Motor neuron (in vitro differentiated cells): ENCODE measurements at regions of chr2 and their contacts with region 1.

Region 1: GRCh38 chr2:172931918-172932520 is 143.6 kb upstream of the MAP3K20 start:
- ATAC-seq: peak in 6 of 8 experiments; percentile 25 to 44 (median 32)
- H3K4me3 ChIP-seq: no peak overlapping the region
- H3K27ac ChIP-seq: no peak overlapping the region
- H3K4me1 ChIP-seq: peaks cover 28 to 43% of the 10 kb centered on the region in 2 donors

Region 2: DNA sequence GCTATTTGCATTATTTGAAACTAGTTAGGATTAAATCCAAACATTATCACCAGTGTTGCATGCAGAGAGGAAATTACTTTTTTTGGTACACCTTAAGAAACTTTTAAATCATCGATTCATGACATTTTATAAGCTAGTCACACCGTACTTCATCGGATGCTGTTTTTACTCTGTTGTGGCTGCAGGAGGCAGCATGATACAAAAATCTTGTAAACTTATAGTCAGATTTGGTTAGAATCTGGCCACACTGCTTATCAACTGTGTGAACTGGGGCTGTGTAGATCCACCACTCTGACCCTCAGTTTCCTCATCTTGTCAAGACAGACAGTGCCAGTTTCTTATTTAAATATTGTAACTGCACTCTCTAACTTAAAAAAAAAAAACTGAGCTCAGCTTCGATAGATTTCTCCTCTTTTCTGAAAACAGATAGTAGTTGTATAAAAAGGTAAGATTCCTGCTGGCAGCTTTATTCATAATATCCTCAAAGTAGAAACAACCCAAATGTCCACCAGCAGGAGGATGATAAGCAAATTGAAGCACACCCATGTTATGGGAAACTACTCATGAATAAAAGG is 118.6 kb before region 1 on chr2:
- in situ Hi-C with region 1: loop called (anchors 5 to 25 kb)
- ATAC-seq: peak in 4 of 8 experiments; percentile 47 to 77 (median 62)
- H3K4me3 ChIP-seq: no peak overlapping the region
- H3K27ac ChIP-seq: no peak overlapping the region
- H3K4me1 ChIP-seq: peaks cover 0 to 39% of the 10 kb centered on the region in 2 donors

Region 3: DNA sequence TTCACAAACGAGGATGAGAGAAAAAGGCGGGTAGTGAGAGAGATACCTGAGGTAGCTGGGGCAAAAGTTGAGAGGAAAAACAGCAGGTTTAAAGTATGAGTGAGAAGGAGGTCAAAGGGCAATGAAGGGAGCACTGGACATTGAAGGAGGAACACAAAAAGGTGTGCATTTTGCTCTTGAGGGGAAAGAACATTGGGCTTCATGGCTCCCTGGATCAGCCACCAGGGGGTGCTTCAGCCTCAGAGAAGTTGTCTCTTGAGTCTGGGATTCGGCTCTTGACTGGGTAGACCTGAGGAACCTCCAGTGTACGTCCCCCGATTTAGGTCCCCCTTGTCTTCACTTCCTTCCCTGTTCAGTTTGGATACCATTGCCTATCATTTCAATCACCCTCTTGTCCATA is 67.8 kb before region 1 on chr2:
- in situ Hi-C with region 1: loop called in 1 of 9 experiments (anchors 10 kb)
- ATAC-seq: peak in 4 of 8 experiments; percentile 31 to 68 (median 41)
- H3K4me3 ChIP-seq: no peak overlapping the region
- H3K27ac ChIP-seq: no peak overlapping the region
- H3K4me1 ChIP-seq: peaks cover 6 to 33% of the 10 kb centered on the region in 2 donors